Activated CD4-positive, alpha-beta T cell treated with anti-CD3 and anti-CD28 coated beads for 36 hours (primary cell): ENCODE measurements at regions of chr12 and their contacts with region 1.

Region 1: DNA sequence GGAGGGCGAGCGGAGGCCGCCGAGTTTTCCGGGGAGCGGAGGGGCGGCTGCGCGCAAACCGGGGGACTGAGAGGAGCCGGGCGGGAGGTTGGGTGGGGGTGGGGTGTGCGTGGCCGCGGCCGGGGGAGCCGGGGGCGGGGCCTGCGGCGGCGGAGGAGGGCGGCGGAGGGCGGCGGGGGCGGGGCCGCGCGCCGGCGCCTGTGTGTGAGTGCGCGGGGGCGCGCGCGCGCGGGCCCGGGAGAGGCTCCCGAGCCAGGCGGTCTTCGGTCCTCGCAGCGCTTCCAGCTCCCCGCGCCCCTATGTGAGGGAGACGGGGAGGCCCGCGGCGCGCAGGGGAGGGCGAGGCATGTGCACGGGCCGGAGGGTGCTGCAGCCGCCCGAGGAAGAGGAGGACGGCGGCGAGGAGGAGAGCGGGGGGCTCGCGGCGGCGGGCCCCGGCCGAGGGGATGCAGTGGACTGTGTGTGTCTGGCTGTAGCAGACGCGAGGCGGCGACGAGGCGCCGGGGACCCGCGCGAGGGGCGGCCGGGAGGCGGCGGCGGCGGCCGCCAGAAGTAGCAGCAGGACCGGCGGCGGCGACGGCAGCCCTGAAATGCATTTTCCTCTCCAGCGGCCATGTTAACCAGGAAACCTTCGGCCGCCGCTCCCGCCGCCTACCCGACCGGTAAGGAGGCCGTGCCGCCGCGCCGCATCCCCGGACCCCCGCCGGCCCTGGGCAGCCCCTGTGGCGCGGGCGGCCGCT is at the start of gene DYRK2:
- DNase-seq: peak; percentile 83
- ATAC-seq: peak; percentile 30
- H3K4me3 Mint-ChIP-seq: peak within 1 kb of the TSS; percentile 98
- H3K27ac Mint-ChIP-seq: peak within 1 kb of the TSS; percentile 78
- H3K4me1 Mint-ChIP-seq: peaks cover 45% of the 10 kb centered on the region
- H3K27me3 Mint-ChIP-seq: no peaks in the 10 kb centered on the region
- total RNA-seq, gene DYRK2: 19.2 to 21.5 TPM

Region 2: GRCh38 chr12:67268896-67269631 is 379.6 kb before region 1 on chr12 and contains the start of gene CAND1:
- CTCF ChIA-PET with region 1: interaction called, 3 read pairs
- POLR2A ChIA-PET with region 1: interaction called, 3 read pairs
- intact Hi-C with region 1: loop called (anchors 1 to 5 kb)
- DNase-seq: peak; percentile 97
- ATAC-seq: peak; percentile 82
- H3K4me3 Mint-ChIP-seq: peak within 1 kb of the TSS; percentile 98
- H3K27ac Mint-ChIP-seq: peak within 1 kb of the TSS; percentile 100
- H3K4me1 Mint-ChIP-seq: peaks cover 31% of the 10 kb centered on the region
- H3K27me3 Mint-ChIP-seq: no peaks in the 10 kb centered on the region
- total RNA-seq, gene CAND1: 158 to 224 TPM

Region 3: DNA sequence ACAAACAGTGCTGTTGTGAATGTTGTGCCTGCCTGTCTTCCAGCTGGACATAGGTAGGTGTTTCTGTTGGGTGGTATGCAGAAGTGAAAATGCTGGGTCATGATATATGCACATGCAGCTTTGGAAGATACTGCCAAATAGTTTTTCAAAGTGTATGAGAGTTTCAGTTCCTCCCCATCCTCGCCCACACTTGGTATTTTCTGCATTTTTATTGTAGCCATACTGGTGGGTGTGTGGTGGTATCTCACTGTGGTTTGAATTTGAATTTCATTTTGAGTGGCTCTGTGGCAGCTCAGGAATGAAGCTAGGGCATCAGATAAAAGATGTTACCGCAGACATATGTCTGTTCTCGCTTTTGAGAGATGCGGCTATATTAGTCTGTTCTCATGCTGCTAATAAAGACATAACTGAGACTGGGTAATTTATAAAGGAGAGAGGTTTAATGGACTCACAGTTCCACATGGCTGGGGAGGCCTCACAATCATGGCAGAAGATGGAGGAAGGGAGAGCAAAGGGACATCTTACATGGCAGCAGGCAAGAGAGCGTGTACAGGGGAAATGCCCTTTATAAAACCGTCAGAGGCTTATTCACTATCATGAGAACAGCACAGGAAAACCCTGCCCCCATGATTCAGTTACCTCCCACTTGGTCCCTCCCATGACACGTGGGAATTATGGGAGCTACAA is 196.4 kb before region 1 on chr12:
- CTCF ChIA-PET with region 1: no interaction called
- POLR2A ChIA-PET with region 1: no interaction called
- intact Hi-C with region 1: loop called in 1 of 2 experiments (anchors 5 kb)
- DNase-seq: peak; percentile 50
- ATAC-seq: peak; percentile 69
- H3K4me3 Mint-ChIP-seq: no peak overlapping the region
- H3K27ac Mint-ChIP-seq: peak overlapping the region; percentile 6
- H3K4me1 Mint-ChIP-seq: peaks cover 44% of the 10 kb centered on the region
- H3K27me3 Mint-ChIP-seq: peaks cover 22% of the 10 kb centered on the region

Region 4: GRCh38 chr12:67630373-67631088 is 18.2 kb before region 1 on chr12:
- CTCF ChIA-PET with region 1: interaction called, 6 read pairs
- POLR2A ChIA-PET with region 1: interaction called, 5 read pairs
- intact Hi-C with region 1: loop called (anchors 1 kb)
- DNase-seq: peak; percentile 90
- ATAC-seq: peak; percentile 93
- H3K4me3 Mint-ChIP-seq: peak overlapping the region; percentile 56
- H3K27ac Mint-ChIP-seq: peak overlapping the region; percentile 90
- H3K4me1 Mint-ChIP-seq: peaks cover 72% of the 10 kb centered on the region
- H3K27me3 Mint-ChIP-seq: no peaks in the 10 kb centered on the region

Region 5: DNA sequence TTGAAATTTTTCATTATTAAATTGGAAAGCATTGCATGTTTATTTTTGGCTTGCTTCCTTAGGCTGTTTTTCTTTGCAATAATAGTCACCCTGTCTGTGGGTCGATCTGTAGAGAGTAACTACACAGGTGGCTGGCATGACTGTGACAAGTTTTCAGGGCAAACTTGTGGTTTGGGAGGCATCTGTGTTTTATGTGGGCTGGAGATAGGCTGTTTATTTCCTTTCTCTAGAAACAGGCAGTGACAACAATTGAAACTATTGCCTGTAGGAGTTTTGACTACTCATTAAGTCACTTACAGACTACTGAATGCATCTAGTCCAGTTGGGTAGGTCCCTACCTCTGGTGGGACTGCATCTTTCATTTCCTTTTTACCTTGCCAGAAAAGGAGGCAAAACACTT is 155.5 kb after region 1 on chr12:
- CTCF ChIA-PET with region 1: no interaction called
- POLR2A ChIA-PET with region 1: no interaction called
- intact Hi-C with region 1: loop called in 1 of 2 experiments (anchors 2 kb)
- DNase-seq: peak; percentile 76
- ATAC-seq: peak; percentile 98
- H3K4me3 Mint-ChIP-seq: no peak overlapping the region
- H3K27ac Mint-ChIP-seq: no peak overlapping the region
- H3K4me1 Mint-ChIP-seq: peaks cover 27% of the 10 kb centered on the region
- H3K27me3 Mint-ChIP-seq: peaks cover 4% of the 10 kb centered on the region

Region 6: GRCh38 chr12:67943226-67943892 is 294.7 kb after region 1 on chr12:
- CTCF ChIA-PET with region 1: interaction called, 4 read pairs
- POLR2A ChIA-PET with region 1: no interaction called
- intact Hi-C with region 1: loop called (anchors 1 to 5 kb)
- DNase-seq: peak; percentile 75
- ATAC-seq: peak; percentile 70
- H3K4me3 Mint-ChIP-seq: no peak overlapping the region
- H3K27ac Mint-ChIP-seq: no peak overlapping the region
- H3K4me1 Mint-ChIP-seq: peaks cover 4% of the 10 kb centered on the region
- H3K27me3 Mint-ChIP-seq: peaks cover 2% of the 10 kb centered on the region